ENCODE measurements at regions of chr12 and their contacts with region 1.

Region 1: DNA sequence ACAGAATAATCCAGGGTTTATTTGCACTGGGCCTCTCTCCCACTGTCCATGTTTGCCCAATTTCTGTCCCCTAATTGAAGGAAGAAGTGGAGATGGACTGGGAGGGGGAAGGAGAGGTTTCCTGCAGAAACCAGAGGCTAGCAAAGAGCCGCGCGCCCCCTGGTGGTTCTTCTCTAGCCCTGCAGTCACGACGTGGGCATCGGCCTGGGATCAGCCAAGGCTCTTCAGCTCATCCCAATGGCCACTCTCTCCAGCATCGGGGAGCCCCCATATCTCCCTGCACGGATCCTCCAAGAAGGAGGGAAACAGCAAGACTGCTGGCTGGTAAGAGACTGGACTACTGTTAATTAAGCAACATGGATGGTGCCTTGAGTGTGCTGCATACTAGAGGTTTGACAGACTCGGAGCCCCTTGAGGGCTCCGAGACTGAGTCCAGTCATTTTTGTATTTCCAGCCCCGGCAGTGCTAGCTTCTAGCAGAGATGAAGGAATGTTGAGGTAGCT is 18.7 kb downstream of the ZBTB39 start:
- DNase-seq: peak; percentile 58
- ATAC-seq: peak; percentile 73
- H3K4me3 ChIP-seq: no peak overlapping the region
- H3K27ac ChIP-seq: no peak overlapping the region
- H3K4me1 ChIP-seq: peaks cover 10 to 30% of the 10 kb centered on the region in 2 experiments; a peak in 3 of 4 replicates
- H3K27me3 ChIP-seq: no peaks in the 10 kb centered on the region
- CTCF ChIP-seq: peak; percentile 94 to 97 (median 95)
- POLR2A ChIP-seq: no peak
- RAD21 ChIP-seq: peak; percentile 99

Region 2: GRCh38 chr12:56751712-56752598 is 235.6 kb before region 1 on chr12 and contains the start of gene PRIM1:
- CTCF ChIA-PET with region 1: interaction called, 3 read pairs
- POLR2A ChIA-PET with region 1: no interaction called
- RAD21 ChIA-PET with region 1: interaction called in 1 of 2 experiments, 3 read pairs
- intact Hi-C with region 1: loop called (anchors 1 kb)
- DNase-seq: peak; percentile 67
- ATAC-seq: peak; percentile 90
- H3K4me3 ChIP-seq: peak within 1 kb of the TSS; percentile 84 to 89
- H3K27ac ChIP-seq: peak within 1 kb of the TSS; percentile 72
- H3K4me1 ChIP-seq: peaks cover 3 to 15% of the 10 kb centered on the region in 2 experiments; a peak in 2 of 4 replicates
- H3K27me3 ChIP-seq: no peaks in the 10 kb centered on the region
- CTCF ChIP-seq: no peak
- POLR2A ChIP-seq: peak; percentile 72
- RAD21 ChIP-seq: no peak
- total RNA-seq, gene PRIM1: 53.3 TPM

Region 3: DNA sequence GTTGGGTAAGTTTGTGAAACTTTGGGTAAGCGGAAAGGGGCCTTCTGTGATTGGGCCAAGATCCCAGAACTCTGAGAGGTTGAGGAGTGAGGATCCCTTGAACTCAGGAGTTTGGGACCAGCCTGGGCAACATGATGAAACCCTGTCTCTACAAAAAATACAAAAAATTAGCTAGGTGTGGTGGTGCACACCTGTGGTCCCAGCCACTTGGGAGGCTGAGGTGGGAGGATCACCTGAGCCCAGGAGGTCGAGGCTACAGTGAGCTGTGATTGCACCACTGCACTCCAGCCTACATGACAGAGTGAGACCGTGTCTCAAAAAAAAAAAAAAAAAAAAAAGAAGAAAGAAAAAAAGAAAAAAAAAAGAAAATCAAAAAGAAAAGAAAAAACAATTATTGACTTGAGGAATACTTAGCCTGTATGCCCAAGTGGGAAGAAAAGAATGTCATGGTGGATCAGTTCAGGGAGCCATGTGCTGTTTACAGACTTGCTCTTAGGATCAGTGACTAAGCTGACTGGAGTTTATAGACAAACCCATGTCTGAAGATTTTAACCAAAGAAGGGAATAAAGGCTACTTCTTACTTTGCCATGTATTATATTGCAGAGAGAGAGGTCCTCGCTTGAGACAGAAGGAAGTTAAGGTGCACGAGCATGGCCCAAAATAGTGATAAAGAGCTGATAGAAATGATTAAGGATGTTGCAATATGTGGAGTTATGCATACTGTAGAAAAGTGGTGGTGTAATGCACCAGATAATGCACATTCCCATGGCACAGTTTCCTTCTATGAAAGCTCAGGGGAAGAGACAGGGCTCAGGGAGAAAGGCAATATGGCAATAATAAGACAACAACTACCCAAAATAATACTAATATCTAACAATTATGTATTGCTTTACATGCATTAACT is 223.6 kb before region 1 on chr12:
- CTCF ChIA-PET with region 1: interaction called, 7 read pairs
- POLR2A ChIA-PET with region 1: no interaction called
- RAD21 ChIA-PET with region 1: interaction called in 1 of 2 experiments, 3 read pairs
- intact Hi-C with region 1: loop called (anchors 2 kb)
- DNase-seq: no peak
- ATAC-seq: no peak
- H3K4me3 ChIP-seq: no peak overlapping the region
- H3K27ac ChIP-seq: no peak overlapping the region
- H3K4me1 ChIP-seq: no peaks in the 10 kb centered on the region
- H3K27me3 ChIP-seq: no peaks in the 10 kb centered on the region
- CTCF ChIP-seq: no peak
- POLR2A ChIP-seq: no peak
- RAD21 ChIP-seq: no peak

Region 4: DNA sequence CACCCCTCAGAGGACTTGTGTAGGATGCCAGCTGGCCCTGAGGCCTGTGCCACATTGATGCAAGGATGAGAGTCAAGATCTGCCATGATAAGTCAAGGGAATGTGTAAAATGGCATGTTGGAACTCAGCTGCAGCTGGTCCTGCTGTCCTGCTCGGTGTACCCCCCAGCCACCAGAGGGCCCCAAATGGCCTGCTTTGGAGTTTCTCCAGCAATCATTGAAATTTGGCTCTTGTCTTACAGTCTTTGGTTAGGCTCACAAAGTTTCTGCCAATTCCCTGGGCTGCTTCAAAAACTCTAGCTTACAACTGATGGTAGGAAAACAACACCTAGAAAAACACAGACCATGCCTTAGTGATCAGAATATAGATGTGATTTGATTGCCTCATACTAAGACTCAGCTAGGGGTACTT is 147.7 kb before region 1 on chr12:
- CTCF ChIA-PET with region 1: interaction called, 36 read pairs
- POLR2A ChIA-PET with region 1: no interaction called
- RAD21 ChIA-PET with region 1: interaction called, 6 to 7 read pairs
- intact Hi-C with region 1: loop called (anchors 1 kb)
- DNase-seq: peak; percentile 48
- ATAC-seq: peak; percentile 87
- H3K4me3 ChIP-seq: no peak overlapping the region
- H3K27ac ChIP-seq: no peak overlapping the region
- H3K4me1 ChIP-seq: peaks cover 0 to 13% of the 10 kb centered on the region in 2 experiments; a peak in 1 of 4 replicates
- H3K27me3 ChIP-seq: no peaks in the 10 kb centered on the region
- CTCF ChIP-seq: peak; percentile 79 to 91 (median 82)
- POLR2A ChIP-seq: no peak
- RAD21 ChIP-seq: peak; percentile 94

Region 5: DNA sequence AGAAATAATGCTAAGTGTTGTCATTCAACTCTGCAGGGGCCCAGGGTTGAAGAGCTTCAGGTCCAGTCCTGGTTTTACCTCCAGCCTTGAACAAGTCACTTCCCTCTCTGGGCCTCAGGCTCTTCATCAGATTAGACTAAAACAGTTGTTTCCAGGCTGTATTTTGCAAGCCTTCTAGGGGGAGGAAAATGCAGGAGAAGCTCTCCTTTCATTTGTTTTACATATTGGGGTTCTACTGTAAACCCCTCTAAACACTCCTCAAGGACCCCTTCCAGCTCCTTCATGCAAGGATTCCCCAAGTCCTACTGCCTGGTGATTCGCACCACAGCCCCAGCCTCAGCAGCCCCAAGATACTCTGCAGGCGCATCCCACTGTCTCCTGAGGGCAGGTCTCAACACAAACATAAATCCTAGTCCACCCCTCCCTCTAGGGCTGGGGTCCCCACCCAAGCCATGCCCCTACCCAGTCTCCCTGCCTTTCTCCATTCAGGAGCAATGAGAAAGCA is 56.1 kb before region 1 on chr12:
- CTCF ChIA-PET with region 1: no interaction called
- POLR2A ChIA-PET with region 1: no interaction called
- RAD21 ChIA-PET with region 1: no interaction called
- intact Hi-C with region 1: no loop called
- DNase-seq: peak; percentile 19
- ATAC-seq: 0 out of 2 replicates have a peak, but pooled peaks have one; percentile 49
- H3K4me3 ChIP-seq: no peak overlapping the region
- H3K27ac ChIP-seq: no peak overlapping the region
- H3K4me1 ChIP-seq: peaks cover 0 to 5% of the 10 kb centered on the region in 2 experiments; a peak in 2 of 4 replicates
- H3K27me3 ChIP-seq: no peaks in the 10 kb centered on the region; the same call in 1 of the 2 replicates
- CTCF ChIP-seq: no peak
- POLR2A ChIP-seq: no peak
- RAD21 ChIP-seq: no peak

Region 6: GRCh38 chr12:56947633-56948456 is 39.8 kb before region 1 on chr12:
- CTCF ChIA-PET with region 1: no interaction called
- POLR2A ChIA-PET with region 1: no interaction called
- RAD21 ChIA-PET with region 1: no interaction called
- intact Hi-C with region 1: loop called (anchors 5 kb)
- DNase-seq: peak; percentile 8
- ATAC-seq: peak; percentile 63; the same call in 1 of the 2 replicates
- H3K4me3 ChIP-seq: no peak overlapping the region
- H3K27ac ChIP-seq: no peak overlapping the region
- H3K4me1 ChIP-seq: peaks cover 0 to 5% of the 10 kb centered on the region in 2 experiments; a peak in 1 of 4 replicates
- H3K27me3 ChIP-seq: no peaks in the 10 kb centered on the region
- CTCF ChIP-seq: peak; percentile 6 to 49 (median 34); a peak in 4 of 6 replicates
- POLR2A ChIP-seq: no peak
- RAD21 ChIP-seq: peak; percentile 70

Region 7: GRCh38 chr12:57272337-57273151 is 284.9 kb after region 1 on chr12:
- CTCF ChIA-PET with region 1: no interaction called
- POLR2A ChIA-PET with region 1: no interaction called
- RAD21 ChIA-PET with region 1: no interaction called
- intact Hi-C with region 1: no loop called
- DNase-seq: no peak
- ATAC-seq: no peak
- H3K4me3 ChIP-seq: no peak overlapping the region
- H3K27ac ChIP-seq: no peak overlapping the region
- H3K4me1 ChIP-seq: no peaks in the 10 kb centered on the region
- H3K27me3 ChIP-seq: no peaks in the 10 kb centered on the region
- CTCF ChIP-seq: no peak
- POLR2A ChIP-seq: no peak
- RAD21 ChIP-seq: no peak

Measured in HCT116 (cell line).